Activated B cell treated with CpG ODN at 0.5 μM for 24 hours (primary cell): ENCODE measurements at regions of chr4 and their contacts with region 1.

Region 1: GRCh38 chr4:119628308-119629141 is at the start of gene PDE5A:
- DNase-seq: peak; percentile 69
- ATAC-seq: peak; percentile 84
- H3K4me3 Mint-ChIP-seq: peak within 1 kb of the TSS; percentile 85
- H3K27ac Mint-ChIP-seq: peak within 1 kb of the TSS; percentile 51
- H3K4me1 Mint-ChIP-seq: peaks cover 25% of the 10 kb centered on the region
- H3K27me3 Mint-ChIP-seq: peaks cover 12% of the 10 kb centered on the region
- CTCF ChIP-seq: peak; percentile 26
- total RNA-seq, gene PDE5A: 0.47 and 0.66 TPM in 2 replicates

Region 2: DNA sequence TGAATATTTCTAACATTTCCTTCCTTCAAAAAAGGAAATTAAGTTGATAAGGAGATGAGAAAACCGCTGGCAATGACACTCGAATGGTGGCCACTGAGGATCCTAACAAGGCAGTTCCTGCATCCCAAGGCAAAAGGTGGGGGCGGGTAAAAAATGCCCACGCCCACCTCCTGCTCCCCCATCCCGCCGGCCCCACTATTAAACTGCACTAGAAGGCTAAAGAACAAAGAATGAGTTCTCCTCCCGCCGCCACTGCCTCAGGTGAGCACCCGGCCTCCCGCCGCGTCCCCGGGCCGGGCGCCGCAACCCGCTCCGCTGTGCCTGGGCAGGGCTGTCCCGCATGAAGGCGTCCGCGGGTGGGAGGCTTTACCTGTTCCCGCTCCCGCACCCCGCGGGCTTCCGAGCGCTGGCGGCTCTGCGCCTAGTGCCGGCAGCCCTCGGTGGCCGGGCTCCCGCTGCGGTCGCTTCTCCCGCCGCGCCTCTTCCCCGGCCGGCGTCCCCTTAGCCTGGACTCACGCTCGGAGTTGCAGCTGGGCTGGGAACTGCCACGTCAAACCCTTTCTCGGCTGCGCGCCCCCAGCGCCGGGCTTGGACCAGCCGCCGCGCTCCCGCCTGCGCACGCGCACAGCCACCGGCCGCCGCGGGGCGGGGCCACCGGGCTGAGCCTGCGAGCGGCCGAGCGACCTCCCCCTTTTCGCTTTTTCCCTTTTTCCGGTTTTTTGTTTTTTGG is 792.8 kb before region 1 on chr4 and contains the start of gene SEC24D:
- CTCF ChIA-PET with region 1: no interaction called
- POLR2A ChIA-PET with region 1: no interaction called
- intact Hi-C with region 1: loop called (anchors 5 kb)
- DNase-seq: peak; percentile 90
- ATAC-seq: peak; percentile 88
- H3K4me3 Mint-ChIP-seq: peak within 1 kb of the TSS; percentile 100
- H3K27ac Mint-ChIP-seq: peak within 1 kb of the TSS; percentile 96
- H3K4me1 Mint-ChIP-seq: peaks cover 17% of the 10 kb centered on the region
- H3K27me3 Mint-ChIP-seq: no peaks in the 10 kb centered on the region
- CTCF ChIP-seq: no peak
- total RNA-seq, gene SEC24D: 19.4 and 22.6 TPM in 2 replicates

Region 3: GRCh38 chr4:119041951-119042560 is 586.5 kb before region 1 on chr4:
- CTCF ChIA-PET with region 1: no interaction called
- POLR2A ChIA-PET with region 1: no interaction called
- intact Hi-C with region 1: loop called (anchors 5 kb)
- DNase-seq: no peak
- ATAC-seq: peak; percentile 83
- H3K4me3 Mint-ChIP-seq: no peak overlapping the region
- H3K27ac Mint-ChIP-seq: no peak overlapping the region
- H3K4me1 Mint-ChIP-seq: peaks cover 5% of the 10 kb centered on the region
- H3K27me3 Mint-ChIP-seq: no peaks in the 10 kb centered on the region
- CTCF ChIP-seq: no peak

Region 4: DNA sequence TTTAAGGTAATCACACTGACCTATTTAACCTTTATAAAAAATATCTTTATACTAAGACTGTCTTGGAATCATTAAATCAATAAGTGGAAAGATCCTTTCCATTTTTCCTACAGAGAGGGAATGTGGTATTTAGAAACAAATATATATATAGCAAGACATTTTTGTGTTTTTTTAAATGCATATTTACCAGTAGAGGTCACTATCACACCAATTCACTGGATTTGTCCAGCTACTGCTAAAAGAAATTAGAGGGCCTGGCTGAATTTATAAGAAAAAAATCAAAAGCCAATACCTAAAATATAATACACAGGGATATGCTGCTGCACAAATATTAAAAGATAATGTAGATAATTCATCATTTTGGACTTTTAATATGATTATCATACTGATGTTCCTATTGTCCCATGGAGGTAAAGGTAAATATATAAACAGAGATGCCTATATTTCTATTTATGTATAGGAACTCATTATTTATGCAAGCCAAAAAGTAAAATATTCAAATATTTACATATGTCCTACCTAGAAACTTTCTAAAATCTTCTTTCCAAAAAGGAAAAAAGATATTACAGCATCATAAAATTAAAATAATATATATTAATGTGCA is 69.4 kb before region 1 on chr4:
- CTCF ChIA-PET with region 1: no interaction called
- POLR2A ChIA-PET with region 1: no interaction called
- intact Hi-C with region 1: loop called (anchors 1 kb)
- DNase-seq: no peak
- ATAC-seq: no peak
- H3K4me3 Mint-ChIP-seq: no peak overlapping the region
- H3K27ac Mint-ChIP-seq: no peak overlapping the region
- H3K4me1 Mint-ChIP-seq: no peaks in the 10 kb centered on the region
- H3K27me3 Mint-ChIP-seq: no peaks in the 10 kb centered on the region
- CTCF ChIP-seq: no peak

Region 5: GRCh38 chr4:120049732-120050494 is 421.4 kb after region 1 on chr4:
- CTCF ChIA-PET with region 1: interaction called, 11 read pairs
- POLR2A ChIA-PET with region 1: no interaction called
- intact Hi-C with region 1: loop called (anchors 1 kb)
- DNase-seq: peak; percentile 30
- ATAC-seq: peak; percentile 93
- H3K4me3 Mint-ChIP-seq: peak overlapping the region; percentile 59
- H3K27ac Mint-ChIP-seq: no peak overlapping the region
- H3K4me1 Mint-ChIP-seq: peaks cover 12% of the 10 kb centered on the region
- H3K27me3 Mint-ChIP-seq: no peaks in the 10 kb centered on the region
- CTCF ChIP-seq: peak; percentile 91